Naive thymus-derived CD4-positive, alpha-beta T cell (primary cell): ENCODE measurements at regions of chr5 and their contacts with region 1.

Region 1: DNA sequence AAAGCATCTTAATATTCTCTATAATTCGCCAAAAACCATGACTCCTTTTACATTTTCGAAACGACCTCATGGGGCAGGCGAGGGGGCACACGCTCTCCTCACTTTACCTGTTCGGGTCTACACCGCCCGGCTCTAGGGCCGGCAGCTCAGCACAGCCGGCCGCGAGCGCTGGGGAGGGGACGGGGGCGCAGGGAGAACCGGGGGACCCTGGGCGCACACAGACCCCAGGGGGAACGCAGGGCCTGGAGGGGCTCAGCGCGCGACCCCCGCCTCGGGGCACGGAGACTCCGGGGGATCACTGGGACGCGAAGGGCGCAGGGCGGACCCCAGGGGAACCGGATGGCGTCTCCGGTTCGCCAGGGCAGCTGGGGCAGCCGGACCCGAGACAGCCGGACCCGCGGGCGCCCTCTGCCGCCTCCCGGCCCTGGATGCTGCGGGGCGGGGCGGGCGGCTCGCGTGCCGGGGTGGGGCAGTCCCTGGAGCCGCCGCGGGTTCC is at the start of gene AHRR:
- DNase-seq: peak in 1 of 9 donors; percentile 86
- ATAC-seq: peak; percentile 48
- H3K4me3 ChIP-seq: no peak within 1 kb of the TSS
- H3K4me3 Mint-ChIP-seq: peak within 1 kb of the TSS in 9 of 10 donors; percentile 42 to 85 (median 69)
- H3K27ac ChIP-seq: no peak within 1 kb of the TSS
- H3K27ac Mint-ChIP-seq: peak within 1 kb of the TSS in 1 of 9 donors; percentile 55
- H3K4me1 ChIP-seq: no peaks in the 10 kb centered on the region
- H3K4me1 Mint-ChIP-seq: peaks cover 0 to 21% (median 12%) of the 10 kb centered on the region in 7 donors
- H3K27me3 ChIP-seq: no peaks in the 10 kb centered on the region
- H3K27me3 Mint-ChIP-seq: peaks cover 19 to 37% (median 30%) of the 10 kb centered on the region in 5 donors
- total RNA-seq, gene AHRR: 0.56 to 23.5 (median 1.4) TPM

Region 2: GRCh38 chr5:231661-232060 is 89.6 kb before region 1 on chr5:
- CTCF ChIA-PET with region 1: no interaction called
- POLR2A ChIA-PET with region 1: no interaction called
- intact Hi-C with region 1: no loop called
- DNase-seq: no peak
- ATAC-seq: no peak
- H3K4me3 ChIP-seq: no peak overlapping the region
- H3K4me3 Mint-ChIP-seq: no peak overlapping the region
- H3K27ac ChIP-seq: no peak overlapping the region
- H3K27ac Mint-ChIP-seq: no peak overlapping the region
- H3K4me1 ChIP-seq: no peaks in the 10 kb centered on the region
- H3K4me1 Mint-ChIP-seq: no peaks in the 10 kb centered on the region
- H3K27me3 ChIP-seq: no peaks in the 10 kb centered on the region
- H3K27me3 Mint-ChIP-seq: no peaks in the 10 kb centered on the region

Region 3: DNA sequence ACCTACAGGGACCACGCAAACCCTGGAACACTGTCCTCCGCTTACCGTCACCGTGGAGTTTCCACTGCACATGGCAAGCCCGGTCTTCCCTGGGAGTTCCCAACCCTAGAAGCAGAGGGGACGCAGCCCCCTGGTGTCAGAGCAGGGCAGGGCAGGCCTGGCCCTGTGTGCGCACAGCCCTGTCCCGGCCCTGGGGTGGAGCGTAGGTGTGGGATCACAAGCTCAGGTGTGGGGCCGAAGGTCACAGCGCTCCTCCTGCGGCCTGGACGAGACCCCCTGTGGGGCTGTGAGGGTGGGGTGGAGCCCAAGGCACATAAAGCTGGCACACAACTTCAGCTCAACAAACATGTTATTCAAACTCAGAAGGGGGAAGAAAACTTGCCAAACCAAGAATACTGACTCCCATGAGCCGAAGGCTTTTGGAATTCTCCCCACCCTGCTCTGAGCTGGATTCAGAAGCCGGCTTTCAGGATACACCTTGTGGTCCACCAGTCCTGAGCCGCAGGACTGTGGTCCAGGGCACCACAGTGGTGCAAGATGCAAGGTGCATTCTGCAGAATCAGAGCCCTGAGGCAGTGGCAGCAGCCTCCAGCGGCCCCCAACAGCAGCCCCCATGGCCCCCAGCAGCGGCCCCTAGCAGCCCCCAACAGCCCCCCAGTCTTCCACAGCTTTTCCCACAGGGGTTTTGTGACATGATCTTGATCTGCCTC is 109.9 kb after region 1 on chr5:
- CTCF ChIA-PET with region 1: no interaction called
- POLR2A ChIA-PET with region 1: no interaction called
- intact Hi-C with region 1: loop called in 1 of 2 experiments (anchors 2 kb)
- DNase-seq: peak in 5 of 9 donors; percentile 9 to 55 (median 29)
- ATAC-seq: peak; percentile 70
- H3K4me3 ChIP-seq: no peak overlapping the region
- H3K4me3 Mint-ChIP-seq: no peak overlapping the region
- H3K27ac ChIP-seq: no peak overlapping the region
- H3K27ac Mint-ChIP-seq: no peak overlapping the region
- H3K4me1 ChIP-seq: no peaks in the 10 kb centered on the region
- H3K4me1 Mint-ChIP-seq: peaks cover 0 to 2% (median 0%) of the 10 kb centered on the region in 7 donors
- H3K27me3 ChIP-seq: no peaks in the 10 kb centered on the region
- H3K27me3 Mint-ChIP-seq: peaks cover 0 to 9% (median 3%) of the 10 kb centered on the region in 5 donors

Region 4: GRCh38 chr5:1511651-1512540 is 1190.6 kb after region 1 on chr5:
- CTCF ChIA-PET with region 1: no interaction called
- POLR2A ChIA-PET with region 1: no interaction called
- intact Hi-C with region 1: no loop called
- DNase-seq: peak in 2 of 9 donors; percentile 7 to 11
- ATAC-seq: no peak
- H3K4me3 ChIP-seq: no peak overlapping the region
- H3K4me3 Mint-ChIP-seq: no peak overlapping the region
- H3K27ac ChIP-seq: no peak overlapping the region
- H3K27ac Mint-ChIP-seq: no peak overlapping the region
- H3K4me1 ChIP-seq: peaks cover 0 to 31% of the 10 kb centered on the region in 2 donors
- H3K4me1 Mint-ChIP-seq: peaks cover 0 to 33% (median 22%) of the 10 kb centered on the region in 7 donors
- H3K27me3 ChIP-seq: no peaks in the 10 kb centered on the region
- H3K27me3 Mint-ChIP-seq: no peaks in the 10 kb centered on the region